ENCODE measurements at regions of chr1 and their contacts with region 1.

Region 1: GRCh38 chr1:31564134-31564989 is 12.0 kb upstream of the TINAGL1 start:
- DNase-seq: peak; percentile 67
- ATAC-seq: no peak
- H3K4me3 Mint-ChIP-seq: no peak overlapping the region
- H3K27ac Mint-ChIP-seq: no peak overlapping the region
- H3K4me1 Mint-ChIP-seq: no peaks in the 10 kb centered on the region
- H3K27me3 Mint-ChIP-seq: peaks cover 9% of the 10 kb centered on the region

Region 2: GRCh38 chr1:31239653-31240241 is 324.6 kb before region 1 on chr1 and contains the start of gene NKAIN1:
- CTCF ChIA-PET with region 1: no interaction called
- POLR2A ChIA-PET with region 1: no interaction called
- intact Hi-C with region 1: no loop called
- DNase-seq: peak; percentile 13
- ATAC-seq: peak; percentile 33
- H3K4me3 Mint-ChIP-seq: peak within 1 kb of the TSS; percentile 29
- H3K27ac Mint-ChIP-seq: no peak within 1 kb of the TSS
- H3K4me1 Mint-ChIP-seq: peaks cover 9% of the 10 kb centered on the region
- H3K27me3 Mint-ChIP-seq: peaks cover 45% of the 10 kb centered on the region
- total RNA-seq, gene NKAIN1: not detected

Region 3: DNA sequence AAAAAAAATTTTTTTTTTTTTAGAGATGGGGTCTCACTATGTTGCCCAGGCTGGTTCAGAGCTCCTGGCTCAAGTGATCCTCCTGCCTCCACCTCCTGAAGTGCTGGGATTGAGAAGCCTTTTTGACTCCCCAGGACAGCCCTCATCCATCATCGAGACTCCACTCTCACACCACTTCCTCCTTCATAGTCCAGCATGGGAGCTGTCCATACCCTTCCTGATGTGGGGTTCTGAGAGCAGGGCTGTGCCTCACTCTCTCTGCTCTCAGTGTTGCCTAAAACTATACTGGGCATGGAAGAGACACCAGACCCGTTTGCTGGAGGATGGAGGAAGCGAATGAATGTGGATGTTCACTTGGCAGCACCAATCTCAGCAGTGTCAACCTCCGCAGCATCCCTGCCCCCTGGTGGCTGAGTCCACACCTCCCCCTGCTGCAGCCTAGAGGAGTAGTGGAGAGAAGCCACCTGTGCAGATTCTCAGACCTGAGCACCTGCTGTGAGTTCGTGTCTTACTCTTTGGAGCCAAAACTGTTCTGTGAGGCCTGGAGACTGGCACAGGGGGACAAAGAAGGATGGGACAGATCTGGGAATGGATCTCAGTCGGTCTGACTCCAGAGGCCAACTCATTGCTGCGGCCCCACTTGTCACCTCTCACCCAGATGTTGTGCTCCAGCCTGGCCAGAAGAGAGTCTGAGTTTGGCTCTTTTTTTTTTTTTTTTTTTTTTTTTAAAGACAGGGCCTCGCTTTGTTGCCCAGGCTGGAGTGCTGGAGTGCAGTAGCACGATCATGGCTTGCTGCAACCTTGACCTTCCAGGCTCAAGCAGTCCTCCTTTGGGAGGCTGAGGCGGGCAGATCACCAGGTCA is 29.6 kb after region 1 on chr1:
- CTCF ChIA-PET with region 1: interaction called, 6 read pairs
- POLR2A ChIA-PET with region 1: no interaction called
- intact Hi-C with region 1: loop called (anchors 1 to 2 kb)
- DNase-seq: peak; percentile 85
- ATAC-seq: peak; percentile 96
- H3K4me3 Mint-ChIP-seq: no peak overlapping the region
- H3K27ac Mint-ChIP-seq: no peak overlapping the region
- H3K4me1 Mint-ChIP-seq: no peaks in the 10 kb centered on the region
- H3K27me3 Mint-ChIP-seq: peaks cover 17% of the 10 kb centered on the region

Region 4: GRCh38 chr1:31617917-31618660 is 53.7 kb after region 1 on chr1:
- CTCF ChIA-PET with region 1: interaction called, 12 read pairs
- POLR2A ChIA-PET with region 1: no interaction called
- intact Hi-C with region 1: loop called (anchors 1 to 2 kb)
- DNase-seq: peak; percentile 73
- ATAC-seq: peak; percentile 85
- H3K4me3 Mint-ChIP-seq: no peak overlapping the region
- H3K27ac Mint-ChIP-seq: no peak overlapping the region
- H3K4me1 Mint-ChIP-seq: peaks cover 3% of the 10 kb centered on the region
- H3K27me3 Mint-ChIP-seq: peaks cover 23% of the 10 kb centered on the region

Region 5: GRCh38 chr1:31633053-31633452 is 68.7 kb after region 1 on chr1:
- CTCF ChIA-PET with region 1: interaction called, 3 read pairs
- POLR2A ChIA-PET with region 1: no interaction called
- intact Hi-C with region 1: loop called in 1 of 2 experiments (anchors 5 kb)
- DNase-seq: peak; percentile 67
- ATAC-seq: no peak
- H3K4me3 Mint-ChIP-seq: no peak overlapping the region
- H3K27ac Mint-ChIP-seq: no peak overlapping the region
- H3K4me1 Mint-ChIP-seq: peaks cover 10% of the 10 kb centered on the region
- H3K27me3 Mint-ChIP-seq: no peaks in the 10 kb centered on the region

Region 6: DNA sequence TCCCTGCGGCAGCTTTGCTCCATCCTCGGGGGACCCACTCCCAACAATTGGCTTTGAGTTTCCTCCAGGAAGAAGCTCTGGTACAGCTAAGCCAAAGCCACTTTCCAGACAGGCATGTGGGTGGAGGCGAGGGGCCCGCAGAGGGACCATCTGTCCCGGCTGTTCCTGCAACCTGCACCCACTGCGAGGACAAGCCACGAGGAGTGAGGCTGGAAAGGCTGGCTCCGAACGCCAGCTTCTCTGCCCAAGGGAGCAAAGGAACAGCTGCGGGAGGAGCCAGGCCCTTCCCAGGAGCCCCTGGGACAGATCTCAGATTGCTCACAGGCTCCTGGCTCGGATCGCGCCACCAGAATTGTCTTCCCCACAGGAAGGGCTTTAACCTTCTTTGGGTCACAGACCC is 108.6 kb after region 1 on chr1:
- CTCF ChIA-PET with region 1: no interaction called
- POLR2A ChIA-PET with region 1: no interaction called
- intact Hi-C with region 1: no loop called
- DNase-seq: no peak
- ATAC-seq: no peak
- H3K4me3 Mint-ChIP-seq: no peak overlapping the region
- H3K27ac Mint-ChIP-seq: no peak overlapping the region
- H3K4me1 Mint-ChIP-seq: peaks cover 8% of the 10 kb centered on the region
- H3K27me3 Mint-ChIP-seq: peaks cover 14% of the 10 kb centered on the region

Region 7: GRCh38 chr1:31705080-31705866 is 140.9 kb after region 1 on chr1:
- CTCF ChIA-PET with region 1: interaction called, 3 read pairs
- POLR2A ChIA-PET with region 1: no interaction called
- intact Hi-C with region 1: loop called in 1 of 2 experiments (anchors 2 kb)
- DNase-seq: peak; percentile 88
- ATAC-seq: peak; percentile 88
- H3K4me3 Mint-ChIP-seq: no peak overlapping the region
- H3K27ac Mint-ChIP-seq: peak overlapping the region; percentile 38
- H3K4me1 Mint-ChIP-seq: peaks cover 34% of the 10 kb centered on the region
- H3K27me3 Mint-ChIP-seq: peaks cover 37% of the 10 kb centered on the region